ENCODE measurements at regions of chr16 and their contacts with region 1.

Region 1: DNA sequence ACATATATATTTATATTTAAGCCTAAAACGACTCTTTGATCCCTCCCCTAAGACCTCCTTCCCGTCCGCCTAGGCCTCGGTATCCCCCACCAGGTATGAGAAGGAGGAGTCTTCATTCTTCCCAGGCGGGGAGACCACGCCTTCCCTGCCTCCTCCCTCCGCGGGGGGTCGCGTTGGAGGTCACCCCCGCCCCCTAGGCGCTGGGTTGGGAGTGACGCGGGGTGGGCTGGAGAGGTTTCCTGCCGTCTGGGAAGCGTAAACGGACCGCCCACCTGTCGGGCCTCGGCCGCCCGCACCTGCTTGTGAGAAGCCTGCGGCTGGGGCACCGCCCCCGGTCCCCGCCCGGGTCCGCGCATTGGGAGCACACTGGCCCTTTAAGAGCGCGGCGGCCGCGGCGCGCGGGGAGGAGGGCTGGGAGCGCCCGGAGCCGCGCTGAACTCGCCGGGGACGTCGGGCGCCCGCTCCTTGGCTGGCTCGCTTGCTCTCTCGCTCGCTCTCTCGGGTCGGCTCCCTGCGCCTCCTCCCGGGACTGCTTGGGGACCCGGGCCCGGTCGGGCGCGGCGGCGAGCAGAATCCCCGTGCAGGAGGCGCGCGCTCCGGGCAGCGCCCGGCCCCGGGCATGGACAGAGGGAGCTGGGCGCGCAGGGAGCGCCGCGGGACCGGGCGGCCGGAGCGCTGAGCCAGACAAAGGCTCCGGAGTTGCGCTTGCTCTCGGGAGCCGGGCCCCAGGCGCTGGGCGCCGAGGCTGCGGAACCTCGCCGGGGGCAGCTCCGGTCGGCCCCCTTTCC is at the start of gene MMP15:
- DNase-seq: peak; percentile 65
- H3K4me3 ChIP-seq: peak within 1 kb of the TSS; percentile 61 to 65
- H3K27ac ChIP-seq: peak within 1 kb of the TSS; percentile 67 to 81
- H3K4me1 ChIP-seq: peaks cover 35% of the 10 kb centered on the region
- H3K27me3 ChIP-seq: no peaks in the 10 kb centered on the region
- CTCF ChIP-seq: no peak
- POLR2A ChIP-seq: peak; percentile 54
- total RNA-seq, gene MMP15: 8.0 to 232 TPM

Region 2: DNA sequence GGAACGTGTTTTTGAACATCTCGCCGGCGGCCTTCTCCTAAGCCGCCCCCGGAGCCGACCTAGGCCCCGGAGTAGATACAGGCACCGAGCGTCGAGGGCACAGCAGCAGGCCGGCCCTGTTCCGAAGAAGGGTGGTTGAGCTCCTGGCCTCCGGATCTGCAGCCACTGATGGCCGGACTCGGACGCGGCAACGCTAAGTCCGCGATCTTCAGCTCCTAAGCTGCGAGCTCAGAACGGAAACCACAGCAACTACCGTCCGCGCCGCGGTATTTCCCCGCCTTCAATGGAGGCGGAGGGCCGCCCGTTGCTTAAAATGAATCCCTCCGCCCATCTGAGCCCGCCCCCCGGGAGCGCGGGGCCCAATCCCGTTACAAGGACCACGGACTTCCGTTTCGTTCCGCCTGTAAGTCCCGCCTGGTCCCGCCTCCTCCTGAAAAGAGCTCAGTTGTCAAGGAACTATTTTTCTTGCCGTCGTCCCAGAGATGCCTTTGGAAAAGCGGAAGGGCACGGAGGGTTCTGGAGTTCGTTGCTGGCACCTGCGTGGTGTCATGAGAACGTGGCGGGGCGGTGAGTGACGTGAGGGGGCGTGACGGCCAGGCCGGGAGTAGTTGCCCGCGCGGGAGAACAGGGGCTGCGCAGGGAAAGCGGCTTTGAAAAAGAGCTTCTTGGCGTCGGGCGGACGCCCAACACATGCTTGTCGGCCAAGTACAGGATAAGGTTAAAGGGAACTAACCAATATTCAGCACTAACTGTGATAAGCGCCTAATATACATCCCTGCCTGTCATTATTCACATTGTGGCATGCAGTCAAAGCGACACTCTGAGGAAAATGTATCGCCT is 103.8 kb after region 1 on chr16 and contains the start of gene CFAP20:
- intact Hi-C with region 1: loop called (anchors 5 kb)
- DNase-seq: peak; percentile 99
- H3K4me3 ChIP-seq: peak within 1 kb of the TSS; percentile 87 to 88
- H3K27ac ChIP-seq: peak within 1 kb of the TSS; percentile 80 to 89
- H3K4me1 ChIP-seq: peaks cover 12% of the 10 kb centered on the region
- H3K27me3 ChIP-seq: no peaks in the 10 kb centered on the region
- CTCF ChIP-seq: peak in 1 of 4 experiments; percentile 9
- POLR2A ChIP-seq: peak; percentile 94
- total RNA-seq, gene CFAP20: 27.2 to 77.7 TPM

Region 3: GRCh38 chr16:58198022-58198683 is 172.6 kb after region 1 on chr16 and contains the start of gene CSNK2A2:
- intact Hi-C with region 1: loop called (anchors 5 kb)
- DNase-seq: peak; percentile 51
- H3K4me3 ChIP-seq: peak within 1 kb of the TSS; percentile 55 to 63
- H3K27ac ChIP-seq: peak within 1 kb of the TSS in 1 of 2 donors; percentile 32
- H3K4me1 ChIP-seq: peaks cover 8% of the 10 kb centered on the region
- H3K27me3 ChIP-seq: no peaks in the 10 kb centered on the region
- CTCF ChIP-seq: peak in 3 of 4 experiments; percentile 30 to 47 (median 36)
- POLR2A ChIP-seq: no peak
- total RNA-seq, gene CSNK2A2: 27.8 to 65.0 TPM

Region 4: GRCh38 chr16:58494981-58495520 is 469.5 kb after region 1 on chr16:
- intact Hi-C with region 1: loop called (anchors 10 kb)
- DNase-seq: no peak
- H3K4me3 ChIP-seq: no peak overlapping the region
- H3K27ac ChIP-seq: no peak overlapping the region
- H3K4me1 ChIP-seq: no peaks in the 10 kb centered on the region
- H3K27me3 ChIP-seq: no peaks in the 10 kb centered on the region
- CTCF ChIP-seq: peak in 1 of 4 experiments; percentile 8
- POLR2A ChIP-seq: no peak

Measured in prostate gland (tissue), 2 donors.